ENCODE measurements at regions of chr5 and their contacts with region 1.

Region 1: DNA sequence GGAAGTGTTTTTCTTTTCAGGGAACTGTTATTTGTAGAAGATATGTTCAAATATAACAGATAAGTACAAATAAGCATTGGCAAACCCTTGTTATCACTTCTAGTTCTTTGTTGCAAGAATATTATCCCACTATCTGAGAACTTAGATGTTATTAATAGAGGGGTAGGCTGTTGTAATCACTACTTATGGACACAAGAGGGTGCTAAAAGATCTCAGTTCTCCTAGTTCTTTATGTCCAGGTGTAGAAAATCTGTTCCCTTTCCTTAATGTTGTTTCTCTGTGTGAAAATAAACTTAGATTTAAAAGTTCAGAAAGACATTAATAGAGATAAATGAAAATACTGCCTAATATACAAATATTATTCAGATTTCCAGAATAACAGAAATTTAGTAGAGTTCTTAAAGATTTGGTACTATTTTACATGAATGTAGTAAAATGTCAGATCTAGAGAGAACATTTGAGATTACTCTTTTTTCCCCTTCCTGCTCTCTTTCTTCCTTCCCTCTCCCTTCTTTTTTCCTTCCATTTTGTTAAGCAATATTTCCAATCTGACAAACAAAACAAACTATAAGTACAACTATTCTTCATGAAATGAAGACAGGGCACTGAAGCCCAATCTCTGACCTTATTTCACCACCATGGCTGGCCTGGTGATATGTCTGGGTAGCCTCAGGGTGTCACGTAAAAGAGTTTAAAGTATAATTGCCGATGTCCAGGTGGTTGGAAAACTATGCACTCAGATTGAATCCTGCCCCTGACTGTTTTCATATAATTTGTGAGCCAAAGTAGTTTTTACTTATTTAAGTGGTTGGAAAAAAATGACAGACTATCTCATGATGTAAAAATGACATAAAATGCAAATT is 43.6 kb upstream of the C5orf46 start:
- DNase-seq: peak; percentile 63
- H3K4me3 ChIP-seq: no peak overlapping the region
- H3K27ac ChIP-seq: no peak overlapping the region
- H3K4me1 ChIP-seq: no peaks in the 10 kb centered on the region
- H3K27me3 ChIP-seq: no peaks in the 10 kb centered on the region
- CTCF ChIP-seq: peak; percentile 40
- POLR2A ChIP-seq: no peak

Region 2: GRCh38 chr5:147930769-147931168 is 19.2 kb before region 1 on chr5:
- CTCF ChIA-PET with region 1: no interaction called
- POLR2A ChIA-PET with region 1: no interaction called
- dilution Hi-C with region 1: no loop called
- intact Hi-C with region 1: no loop called
- DNase-seq: no peak
- H3K4me3 ChIP-seq: no peak overlapping the region
- H3K27ac ChIP-seq: no peak overlapping the region
- H3K4me1 ChIP-seq: no peaks in the 10 kb centered on the region
- H3K27me3 ChIP-seq: no peaks in the 10 kb centered on the region
- CTCF ChIP-seq: no peak
- POLR2A ChIP-seq: no peak

Region 3: DNA sequence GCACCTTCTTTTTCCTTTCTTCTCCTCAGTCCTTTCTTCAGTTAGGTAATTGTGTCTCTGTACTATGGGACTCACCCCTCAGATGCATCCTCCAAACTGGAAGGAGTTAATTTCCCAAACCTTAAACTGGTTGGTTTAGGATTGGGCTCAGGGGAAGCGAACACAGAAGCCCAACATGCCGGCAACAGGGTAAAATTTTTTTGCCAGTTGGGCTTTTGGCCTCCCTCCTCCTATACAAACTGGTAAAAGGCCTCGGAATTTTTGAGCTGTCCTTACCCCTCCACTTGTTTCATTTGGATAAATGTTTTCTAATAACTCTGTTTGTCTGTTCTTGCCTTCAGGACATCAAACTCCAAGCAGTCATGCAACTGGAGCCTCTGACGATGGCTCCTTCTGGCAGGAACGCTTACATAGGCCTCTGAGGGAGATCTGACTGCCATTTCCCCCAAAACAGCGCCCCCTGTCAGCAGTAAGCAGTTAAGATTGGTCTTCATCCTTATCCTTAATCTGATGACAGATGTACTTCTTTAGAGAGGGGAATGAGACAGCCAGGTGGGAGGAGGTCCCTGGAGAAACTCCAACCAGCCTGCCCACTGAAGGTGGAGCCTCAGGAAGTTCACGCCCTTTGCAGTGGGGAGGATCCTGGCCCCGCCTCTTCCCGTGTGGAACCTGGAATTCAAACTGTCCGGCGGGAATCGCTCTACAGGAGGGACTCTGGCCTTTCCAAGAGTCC is 56.0 kb after region 1 on chr5:
- CTCF ChIA-PET with region 1: no interaction called
- POLR2A ChIA-PET with region 1: no interaction called
- dilution Hi-C with region 1: no loop called
- intact Hi-C with region 1: loop called (anchors 2 kb)
- DNase-seq: no peak
- H3K4me3 ChIP-seq: no peak overlapping the region
- H3K27ac ChIP-seq: no peak overlapping the region
- H3K4me1 ChIP-seq: no peaks in the 10 kb centered on the region
- H3K27me3 ChIP-seq: no peaks in the 10 kb centered on the region
- CTCF ChIP-seq: no peak
- POLR2A ChIP-seq: no peak

Region 4: GRCh38 chr5:148120317-148120716 is 170.4 kb after region 1 on chr5:
- CTCF ChIA-PET with region 1: interaction called, 18 read pairs
- POLR2A ChIA-PET with region 1: no interaction called
- dilution Hi-C with region 1: no loop called
- intact Hi-C with region 1: loop called (anchors 1 kb)
- DNase-seq: no peak
- H3K4me3 ChIP-seq: no peak overlapping the region
- H3K27ac ChIP-seq: no peak overlapping the region
- H3K4me1 ChIP-seq: no peaks in the 10 kb centered on the region
- H3K27me3 ChIP-seq: no peaks in the 10 kb centered on the region
- CTCF ChIP-seq: no peak
- POLR2A ChIP-seq: no peak

Region 5: GRCh38 chr5:148179234-148179824 is 229.4 kb after region 1 on chr5:
- CTCF ChIA-PET with region 1: interaction called, 5 read pairs
- POLR2A ChIA-PET with region 1: no interaction called
- dilution Hi-C with region 1: no loop called
- intact Hi-C with region 1: loop called (anchors 1 kb)
- DNase-seq: peak; percentile 78
- H3K4me3 ChIP-seq: no peak overlapping the region
- H3K27ac ChIP-seq: no peak overlapping the region
- H3K4me1 ChIP-seq: no peaks in the 10 kb centered on the region
- H3K27me3 ChIP-seq: no peaks in the 10 kb centered on the region
- CTCF ChIP-seq: peak; percentile 53 to 56
- POLR2A ChIP-seq: no peak

Region 6: DNA sequence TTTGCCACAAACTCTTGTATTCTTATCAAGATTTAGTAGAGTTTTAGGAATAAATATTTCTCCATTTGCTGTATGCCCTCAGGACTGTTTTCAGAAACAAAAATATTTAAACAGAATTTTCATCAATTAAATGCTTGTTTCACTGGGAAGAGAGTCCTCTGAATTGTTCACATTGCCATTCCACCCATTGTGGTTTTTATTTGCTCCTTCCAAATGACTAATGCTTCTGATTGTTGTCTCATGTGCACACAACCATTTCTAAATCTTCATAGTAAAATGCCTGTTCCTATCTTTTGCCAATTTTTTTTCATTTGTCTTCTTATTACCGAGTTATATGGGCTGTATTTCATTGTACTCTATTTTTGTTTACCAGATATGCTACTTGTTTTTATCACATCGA is 299.0 kb after region 1 on chr5:
- CTCF ChIA-PET with region 1: no interaction called
- POLR2A ChIA-PET with region 1: no interaction called
- dilution Hi-C with region 1: no loop called
- intact Hi-C with region 1: no loop called
- DNase-seq: no peak
- H3K4me3 ChIP-seq: no peak overlapping the region
- H3K27ac ChIP-seq: no peak overlapping the region
- H3K4me1 ChIP-seq: no peaks in the 10 kb centered on the region
- H3K27me3 ChIP-seq: no peaks in the 10 kb centered on the region
- CTCF ChIP-seq: no peak
- POLR2A ChIP-seq: no peak

Region 7: GRCh38 chr5:148443998-148444397 is 494.1 kb after region 1 on chr5:
- CTCF ChIA-PET with region 1: no interaction called
- POLR2A ChIA-PET with region 1: no interaction called
- dilution Hi-C with region 1: no loop called
- intact Hi-C with region 1: loop called (anchors 5 kb)
- DNase-seq: peak; percentile 79
- H3K4me3 ChIP-seq: no peak overlapping the region
- H3K27ac ChIP-seq: no peak overlapping the region
- H3K4me1 ChIP-seq: no peaks in the 10 kb centered on the region
- H3K27me3 ChIP-seq: no peaks in the 10 kb centered on the region
- CTCF ChIP-seq: peak; percentile 48 to 50
- POLR2A ChIP-seq: no peak